Activated CD8-positive, alpha-beta memory T cell treated with anti-CD3 and anti-CD28 coated beads, Interleukin-2, amount 10 ng/mL, durations not matched to agents 7 days and 5 days (primary cell): ENCODE measurements at regions of chr1 and their contacts with region 1.

Region 1: GRCh38 chr1:207963427-207964194 is 52.7 kb upstream of the CD34 start:
- DNase-seq: peak; percentile 86
- ATAC-seq: peak; percentile 84
- H3K4me3 Mint-ChIP-seq: peak overlapping the region; percentile 74
- H3K27ac Mint-ChIP-seq: peak overlapping the region; percentile 81
- H3K4me1 Mint-ChIP-seq: peaks cover 8% of the 10 kb centered on the region
- H3K27me3 Mint-ChIP-seq: peaks cover 39% of the 10 kb centered on the region

Region 2: GRCh38 chr1:207797229-207797961 is 166.2 kb before region 1 on chr1:
- CTCF ChIA-PET with region 1: interaction called, 22 read pairs
- DNase-seq: peak; percentile 87
- ATAC-seq: peak; percentile 85
- H3K4me3 Mint-ChIP-seq: no peak overlapping the region
- H3K27ac Mint-ChIP-seq: no peak overlapping the region
- H3K4me1 Mint-ChIP-seq: peaks cover 42% of the 10 kb centered on the region
- H3K27me3 Mint-ChIP-seq: no peaks in the 10 kb centered on the region

Region 3: DNA sequence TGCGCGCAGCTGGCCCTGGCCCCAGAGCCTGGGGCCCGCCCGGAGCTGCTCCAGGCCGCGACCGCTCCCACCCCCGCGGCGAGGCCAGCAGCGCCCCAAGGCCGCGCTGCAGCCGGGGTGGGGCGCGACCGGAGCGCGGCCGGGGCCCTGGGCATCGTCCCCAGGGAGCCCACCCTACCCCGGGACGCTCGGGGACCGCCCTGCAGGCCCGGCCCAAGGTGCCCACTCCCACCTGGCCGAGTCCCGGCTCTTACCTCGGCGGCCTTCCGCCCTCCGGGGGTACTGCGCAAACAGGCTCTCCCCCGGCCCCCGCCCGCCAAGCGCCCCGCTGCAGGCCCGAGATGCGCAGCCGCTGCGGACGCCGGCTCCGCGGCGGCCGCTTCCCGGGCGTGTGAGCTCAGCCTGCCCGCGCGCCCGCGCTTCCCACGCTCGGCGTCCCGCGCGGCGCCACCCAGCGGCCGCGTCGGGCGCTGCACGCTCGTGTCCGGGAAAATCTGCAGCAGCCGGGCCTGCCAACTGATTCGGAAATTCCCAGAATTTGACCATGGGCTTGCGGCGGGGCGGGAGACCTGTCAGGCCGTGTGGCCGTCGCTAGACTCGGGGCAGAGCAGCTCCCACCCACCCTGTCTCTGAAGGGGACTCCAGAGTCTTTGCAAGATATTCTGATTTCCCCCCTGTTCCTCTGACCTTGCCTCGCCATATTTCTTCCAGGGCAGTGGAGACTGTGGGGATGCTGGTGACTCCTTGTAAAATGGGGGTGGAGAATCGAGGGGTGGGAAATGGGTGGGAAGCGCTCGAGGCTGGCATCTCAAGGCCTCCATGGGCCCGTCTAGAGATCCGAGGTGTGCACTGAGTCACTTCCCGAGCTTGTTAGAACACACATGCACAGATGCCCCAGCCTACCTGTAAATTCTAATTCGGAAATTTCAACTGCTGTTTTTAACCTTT is 94.6 kb before region 1 on chr1:
- CTCF ChIA-PET with region 1: interaction called, 37 read pairs
- DNase-seq: peak; percentile 66
- ATAC-seq: peak; percentile 73
- H3K4me3 Mint-ChIP-seq: peak overlapping the region; percentile 93
- H3K27ac Mint-ChIP-seq: peak overlapping the region; percentile 90
- H3K4me1 Mint-ChIP-seq: peaks cover 80% of the 10 kb centered on the region
- H3K27me3 Mint-ChIP-seq: no peaks in the 10 kb centered on the region

Region 4: DNA sequence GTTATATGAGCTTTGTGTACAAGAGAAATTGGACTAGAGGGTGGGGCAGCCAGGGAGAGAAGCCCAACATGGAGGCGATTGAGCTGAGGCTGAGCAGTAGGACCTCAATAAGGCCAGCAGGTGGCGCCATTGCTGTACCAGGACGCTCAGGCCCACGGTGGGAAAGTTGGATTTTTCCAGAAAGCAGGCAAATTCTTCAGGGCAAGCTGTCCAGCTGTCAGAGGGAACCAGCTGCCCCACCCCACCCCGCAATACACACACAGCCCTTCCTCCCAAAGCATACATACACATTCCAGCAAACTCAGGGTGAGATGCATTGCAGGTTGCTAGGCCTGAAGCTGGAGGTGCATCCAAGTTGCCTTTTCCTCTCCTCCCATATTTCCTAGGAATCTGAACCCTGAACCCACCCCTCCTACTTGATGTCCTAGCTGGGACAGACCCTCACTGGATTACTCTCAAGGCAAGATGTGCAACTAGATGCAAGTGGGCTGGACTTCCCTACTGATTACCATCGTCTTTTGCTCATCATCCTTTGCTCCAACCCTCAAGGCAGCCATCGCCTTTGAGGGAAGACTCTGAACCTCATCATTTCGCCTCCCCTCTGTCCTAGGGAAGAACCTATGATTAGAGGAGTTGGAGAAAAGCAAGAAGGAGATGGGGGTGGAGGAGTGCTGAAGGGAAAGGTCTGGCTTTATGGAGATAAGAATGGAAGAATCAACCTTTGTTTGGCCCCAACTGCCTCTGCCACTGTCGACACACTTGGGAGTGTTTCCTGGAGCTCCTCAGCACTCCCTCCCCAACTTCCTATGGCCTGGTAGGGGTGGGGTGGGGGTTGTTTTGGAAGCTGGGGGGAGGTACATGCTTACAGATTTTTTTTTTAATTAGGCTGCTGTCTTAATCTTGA is 78.2 kb before region 1 on chr1:
- CTCF ChIA-PET with region 1: interaction called, 235 read pairs
- DNase-seq: peak; percentile 81
- ATAC-seq: peak; percentile 77
- H3K4me3 Mint-ChIP-seq: no peak overlapping the region
- H3K27ac Mint-ChIP-seq: peak overlapping the region; percentile 97
- H3K4me1 Mint-ChIP-seq: peaks cover 35% of the 10 kb centered on the region
- H3K27me3 Mint-ChIP-seq: peaks cover 3% of the 10 kb centered on the region

Region 5: GRCh38 chr1:207903767-207904166 is 59.8 kb before region 1 on chr1:
- CTCF ChIA-PET with region 1: interaction called, 47 read pairs
- DNase-seq: no peak
- ATAC-seq: peak; percentile 42
- H3K4me3 Mint-ChIP-seq: no peak overlapping the region
- H3K27ac Mint-ChIP-seq: no peak overlapping the region
- H3K4me1 Mint-ChIP-seq: peaks cover 40% of the 10 kb centered on the region
- H3K27me3 Mint-ChIP-seq: peaks cover 10% of the 10 kb centered on the region

Region 6: DNA sequence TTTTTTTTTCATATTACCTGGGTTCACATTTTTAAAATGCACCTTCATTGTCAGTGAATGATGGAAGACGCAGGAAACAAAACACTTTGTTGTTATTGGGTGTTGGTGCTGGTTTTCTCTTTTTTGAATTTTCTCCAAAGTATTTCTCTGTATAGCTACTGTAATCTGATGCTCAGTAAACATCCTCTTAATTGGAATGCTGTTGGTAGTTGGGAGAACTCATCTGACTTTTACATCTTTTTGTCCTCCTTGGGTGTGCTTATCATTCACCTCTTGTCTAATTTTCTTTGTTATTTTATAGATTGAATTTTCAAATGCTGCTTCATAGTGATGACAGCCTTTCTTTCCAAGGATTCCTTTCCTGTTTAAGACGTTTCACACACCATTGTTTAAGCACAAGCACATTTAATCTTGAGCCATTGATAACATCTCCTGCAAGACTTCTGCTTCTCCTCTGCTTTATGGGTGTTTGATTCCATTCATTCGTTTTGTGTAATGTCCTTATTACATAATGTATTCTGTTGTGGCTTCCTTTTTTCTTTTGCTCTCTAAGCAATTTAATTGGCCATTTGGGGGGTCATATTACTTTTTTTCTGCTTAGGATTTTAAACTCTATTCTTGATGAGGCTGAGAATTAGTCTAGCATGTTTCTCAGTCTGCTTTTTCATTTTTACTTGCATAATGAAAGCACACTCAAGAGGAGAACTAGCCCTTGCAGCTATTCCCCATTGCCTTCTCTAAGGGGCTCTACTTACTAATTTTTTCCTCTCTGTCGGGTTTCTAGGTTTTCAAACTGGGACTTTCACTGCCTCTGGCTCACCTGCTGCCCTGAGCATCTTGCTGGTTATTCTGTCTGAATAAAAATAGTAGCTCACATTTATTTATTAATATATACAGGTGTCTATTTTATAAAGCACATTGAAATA is 10.7 kb before region 1 on chr1:
- CTCF ChIA-PET with region 1: interaction called, 32 read pairs
- DNase-seq: no peak
- ATAC-seq: no peak
- H3K4me3 Mint-ChIP-seq: no peak overlapping the region
- H3K27ac Mint-ChIP-seq: no peak overlapping the region
- H3K4me1 Mint-ChIP-seq: no peaks in the 10 kb centered on the region
- H3K27me3 Mint-ChIP-seq: peaks cover 50% of the 10 kb centered on the region